T-cell (primary cell): ENCODE measurements at regions of chr3 and their contacts with region 1.

Region 1: GRCh38 chr3:180093535-180093934 is 56.8 kb upstream of the PEX5L start:
- DNase-seq: no peak
- ATAC-seq: no peak
- H3K4me3 ChIP-seq: no peak overlapping the region
- H3K4me3 Mint-ChIP-seq: no peak overlapping the region
- H3K27ac ChIP-seq: no peak overlapping the region
- H3K27ac Mint-ChIP-seq: no peak overlapping the region
- H3K4me1 ChIP-seq: no peaks in the 10 kb centered on the region
- H3K4me1 Mint-ChIP-seq: no peaks in the 10 kb centered on the region
- H3K27me3 ChIP-seq: no peaks in the 10 kb centered on the region
- H3K27me3 Mint-ChIP-seq: no peaks in the 10 kb centered on the region

Region 2: GRCh38 chr3:181230258-181230657 is 1136.7 kb after region 1 on chr3:
- CTCF ChIA-PET with region 1: interaction called in 1 of 2 experiments, 13 read pairs
- POLR2A ChIA-PET with region 1: no interaction called
- DNase-seq: no peak
- ATAC-seq: no peak
- H3K4me3 ChIP-seq: no peak overlapping the region
- H3K4me3 Mint-ChIP-seq: no peak overlapping the region
- H3K27ac ChIP-seq: no peak overlapping the region
- H3K27ac Mint-ChIP-seq: no peak overlapping the region
- H3K4me1 ChIP-seq: no peaks in the 10 kb centered on the region
- H3K4me1 Mint-ChIP-seq: no peaks in the 10 kb centered on the region
- H3K27me3 ChIP-seq: peaks cover 0 to 10% of the 10 kb centered on the region in 2 experiments
- H3K27me3 Mint-ChIP-seq: no peaks in the 10 kb centered on the region